Heart left ventricle (tissue), 16 donors: ENCODE measurements at regions of chr6 and their contacts with region 1.

Region 1: GRCh38 chr6:17932330-17932852 is 55.0 kb downstream of the KIF13A start:
- DNase-seq: peak in 4 of 5 donors; percentile 77 to 84 (median 82)
- ATAC-seq: peak; percentile 90 to 95 (median 92)
- H3K4me3 ChIP-seq: peak overlapping the region in 5 of 12 donors; percentile 6 to 19 (median 9)
- H3K27ac ChIP-seq: peak overlapping the region; percentile 75 to 90 (median 82)
- H3K4me1 ChIP-seq: peaks cover 9 to 98% (median 86%) of the 10 kb centered on the region in 12 donors
- H3K27me3 ChIP-seq: no peaks in the 10 kb centered on the region
- CTCF ChIP-seq: no peak
- POLR2A ChIP-seq: no peak

Region 2: DNA sequence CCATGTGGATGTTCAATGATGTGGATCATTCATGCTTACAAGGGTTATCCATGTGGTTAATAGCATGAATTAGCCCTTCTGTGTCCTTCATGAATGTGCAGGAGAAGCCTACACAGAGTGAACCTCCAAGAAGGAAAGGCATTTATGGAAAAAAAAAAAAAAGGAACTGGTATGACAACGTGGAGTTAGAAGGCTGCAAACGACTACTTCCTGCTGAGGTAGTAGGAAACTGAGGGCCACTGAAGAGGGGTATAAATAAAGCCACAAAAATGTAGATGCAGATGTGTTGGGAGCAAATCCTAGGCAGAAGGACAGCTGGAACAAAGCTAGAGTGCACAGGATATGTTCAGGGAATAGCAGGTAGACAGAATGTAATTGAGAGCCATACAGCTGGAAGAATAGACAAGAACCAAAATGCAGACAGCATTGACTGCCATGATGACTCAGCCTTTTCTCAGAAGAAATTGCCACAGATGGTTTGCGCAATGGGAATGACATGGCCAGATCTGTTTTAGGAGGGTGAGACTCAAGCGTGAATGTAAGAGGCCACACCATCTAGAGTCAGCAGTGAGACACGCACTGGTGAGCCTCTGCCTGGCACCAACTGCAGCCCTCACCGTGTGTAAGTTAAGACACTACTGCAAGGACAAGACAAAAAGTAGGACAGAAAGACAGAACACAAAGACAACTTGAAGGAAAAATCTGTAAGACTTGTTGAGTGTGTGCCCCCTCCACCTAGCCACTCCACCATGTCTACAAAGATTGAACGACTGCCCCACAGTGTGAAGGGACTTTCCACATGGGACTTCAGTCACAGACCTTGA is 24.8 kb before region 1 on chr6:
- intact Hi-C with region 1: no loop called
- DNase-seq: peak in 4 of 5 donors; percentile 39 to 76 (median 53)
- ATAC-seq: peak in 3 of 4 donors; percentile 76 to 96 (median 89)
- H3K4me3 ChIP-seq: no peak overlapping the region
- H3K27ac ChIP-seq: peak overlapping the region in 9 of 12 donors; percentile 7 to 82 (median 35)
- H3K4me1 ChIP-seq: peaks cover 2 to 87% (median 46%) of the 10 kb centered on the region in 12 donors
- H3K27me3 ChIP-seq: no peaks in the 10 kb centered on the region
- CTCF ChIP-seq: no peak
- POLR2A ChIP-seq: no peak

Region 3: GRCh38 chr6:17950095-17950494 is 17.7 kb after region 1 on chr6:
- intact Hi-C with region 1: no loop called
- DNase-seq: no peak
- ATAC-seq: no peak
- H3K4me3 ChIP-seq: no peak overlapping the region
- H3K27ac ChIP-seq: no peak overlapping the region
- H3K4me1 ChIP-seq: peaks cover 0 to 43% (median 17%) of the 10 kb centered on the region in 12 donors
- H3K27me3 ChIP-seq: no peaks in the 10 kb centered on the region
- CTCF ChIP-seq: no peak
- POLR2A ChIP-seq: no peak

Region 4: GRCh38 chr6:17962436-17963031 is 30.1 kb after region 1 on chr6:
- intact Hi-C with region 1: loop called in 3 of 10 experiments (anchors 5 kb)
- DNase-seq: peak; percentile 78 to 91 (median 86)
- ATAC-seq: peak; percentile 98 to 99 (median 98)
- H3K4me3 ChIP-seq: peak overlapping the region in 2 of 12 donors; percentile 2 to 5
- H3K27ac ChIP-seq: peak overlapping the region in 9 of 12 donors; percentile 18 to 79 (median 48)
- H3K4me1 ChIP-seq: peaks cover 9 to 96% (median 68%) of the 10 kb centered on the region in 12 donors
- H3K27me3 ChIP-seq: no peaks in the 10 kb centered on the region
- CTCF ChIP-seq: no peak
- POLR2A ChIP-seq: no peak

Region 5: GRCh38 chr6:17971128-17972073 is 39.0 kb after region 1 on chr6:
- intact Hi-C with region 1: loop called in 3 of 10 experiments (anchors 5 kb)
- DNase-seq: peak in 2 of 5 donors; percentile 34 to 56
- ATAC-seq: peak in 3 of 4 donors; percentile 45 to 50 (median 46)
- H3K4me3 ChIP-seq: peak overlapping the region in 3 of 12 donors; percentile 3 to 14 (median 9)
- H3K27ac ChIP-seq: peak overlapping the region in 11 of 12 donors; percentile 4 to 88 (median 55)
- H3K4me1 ChIP-seq: peaks cover 0 to 87% (median 68%) of the 10 kb centered on the region in 12 donors
- H3K27me3 ChIP-seq: no peaks in the 10 kb centered on the region
- CTCF ChIP-seq: no peak
- POLR2A ChIP-seq: no peak

Region 6: GRCh38 chr6:19391926-19392325 is 1459.5 kb after region 1 on chr6:
- intact Hi-C with region 1: no loop called
- DNase-seq: no peak
- ATAC-seq: no peak
- H3K4me3 ChIP-seq: no peak overlapping the region
- H3K27ac ChIP-seq: no peak overlapping the region
- H3K4me1 ChIP-seq: no peaks in the 10 kb centered on the region
- H3K27me3 ChIP-seq: no peaks in the 10 kb centered on the region
- CTCF ChIP-seq: no peak
- POLR2A ChIP-seq: no peak